ENCODE measurements at regions of chr14 and their contacts with region 1.

Region 1: GRCh38 chr14:41766772-41767171 is 160.1 kb downstream of the LRFN5 start:
- DNase-seq: no peak
- H3K4me3 ChIP-seq: no peak overlapping the region
- H3K27ac ChIP-seq: no peak overlapping the region
- H3K4me1 ChIP-seq: no peaks in the 10 kb centered on the region
- H3K27me3 ChIP-seq: no peaks in the 10 kb centered on the region
- CTCF ChIP-seq: no peak

Region 2: DNA sequence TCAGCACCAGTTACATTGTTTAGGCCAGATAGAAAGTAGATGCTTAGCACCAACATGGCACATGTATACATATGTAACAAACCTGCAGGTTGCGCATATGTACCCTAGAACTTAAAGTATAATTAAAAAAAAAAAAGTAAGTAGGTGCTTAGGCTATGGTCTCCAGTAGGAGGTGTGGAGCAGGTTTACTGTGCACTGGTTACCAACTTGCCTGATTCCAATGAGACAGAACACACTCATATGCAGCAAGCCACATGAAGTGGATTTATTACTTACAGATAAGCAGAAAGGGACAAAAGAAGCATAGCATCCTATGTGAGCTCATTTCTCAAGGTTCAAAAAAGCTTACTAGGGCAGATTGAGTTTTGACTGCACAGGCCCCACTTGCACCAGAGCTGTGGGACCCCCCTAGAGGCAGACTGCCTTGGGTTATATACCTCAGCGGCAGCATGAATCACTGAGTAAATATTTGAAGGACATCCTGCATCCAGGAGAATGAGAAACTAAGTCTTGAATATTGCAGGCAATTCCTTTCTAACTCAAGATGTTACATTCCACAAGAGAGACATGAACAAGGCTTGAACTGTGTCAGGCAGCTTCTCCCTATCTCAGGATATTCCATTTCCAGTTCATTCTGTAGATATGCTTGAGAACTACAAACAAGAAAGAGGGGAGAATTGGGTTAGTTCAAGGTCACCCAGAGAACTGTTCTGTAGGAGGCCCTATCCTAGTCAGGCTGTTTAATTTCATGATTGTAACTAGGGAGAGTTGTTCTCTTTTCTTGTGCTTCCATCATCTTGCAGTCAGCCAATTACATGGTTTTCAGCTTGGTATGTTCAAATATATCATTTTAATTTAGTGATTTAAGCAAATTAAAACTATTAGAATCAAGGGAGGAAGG is 130.0 kb before region 1 on chr14:
- CTCF ChIA-PET with region 1: no interaction called
- dilution Hi-C with region 1: no loop called
- in situ Hi-C with region 1: no loop called
- intact Hi-C with region 1: no loop called
- DNase-seq: no peak
- H3K4me3 ChIP-seq: no peak overlapping the region
- H3K27ac ChIP-seq: no peak overlapping the region
- H3K4me1 ChIP-seq: no peaks in the 10 kb centered on the region
- H3K27me3 ChIP-seq: no peaks in the 10 kb centered on the region
- CTCF ChIP-seq: no peak

Region 3: GRCh38 chr14:41859336-41859735 is 92.6 kb after region 1 on chr14:
- CTCF ChIA-PET with region 1: no interaction called
- dilution Hi-C with region 1: no loop called
- in situ Hi-C with region 1: no loop called
- intact Hi-C with region 1: loop called (anchors 10 kb)
- DNase-seq: no peak
- H3K4me3 ChIP-seq: no peak overlapping the region
- H3K27ac ChIP-seq: no peak overlapping the region
- H3K4me1 ChIP-seq: no peaks in the 10 kb centered on the region
- H3K27me3 ChIP-seq: no peaks in the 10 kb centered on the region
- CTCF ChIP-seq: no peak

Measured in mammary epithelial cell (primary cell).